H1 (cell line): ENCODE measurements at regions of chr1 and their contacts with region 1.

Region 1: GRCh38 chr1:220281159-220281574 is 8.9 kb upstream of the RAB3GAP2 start:
- DNase-seq: no peak
- H3K4me3 ChIP-seq: no peak overlapping the region
- H3K27ac ChIP-seq: no peak overlapping the region
- H3K4me1 ChIP-seq: no peaks in the 10 kb centered on the region
- H3K27me3 ChIP-seq: no peaks in the 10 kb centered on the region
- CTCF ChIP-seq: peak in 2 of 3 experiments; percentile 47 to 65; a peak in 2 of 4 replicates
- EP300 ChIP-seq: no peak
- POLR2A ChIP-seq: no peak
- RAD21 ChIP-seq: peak; percentile 83 to 85

Region 2: DNA sequence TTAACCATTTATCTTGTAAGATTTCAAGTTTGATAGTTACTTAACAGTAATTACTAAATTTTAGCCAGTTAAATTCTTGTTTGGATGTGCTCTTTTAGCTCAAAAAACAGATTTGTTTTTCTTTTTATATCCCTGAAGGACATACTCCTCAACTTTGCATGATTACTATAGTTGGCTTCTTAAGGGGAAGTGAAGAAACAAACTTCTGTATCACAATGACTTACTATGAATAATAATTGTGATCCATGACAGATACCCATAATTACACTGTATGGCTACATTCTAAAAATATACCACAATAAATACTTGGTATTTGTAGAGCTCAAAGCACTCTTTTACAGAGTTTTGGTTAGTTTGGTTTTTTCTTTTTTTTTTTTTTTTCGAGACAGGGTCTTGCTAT is 131.4 kb before region 1 on chr1:
- CTCF ChIA-PET with region 1: no interaction called
- POLR2A ChIA-PET with region 1: no interaction called
- DNase-seq: no peak
- H3K4me3 ChIP-seq: no peak overlapping the region
- H3K27ac ChIP-seq: no peak overlapping the region
- H3K4me1 ChIP-seq: no peaks in the 10 kb centered on the region
- H3K27me3 ChIP-seq: no peaks in the 10 kb centered on the region
- CTCF ChIP-seq: no peak
- EP300 ChIP-seq: no peak
- POLR2A ChIP-seq: no peak
- RAD21 ChIP-seq: no peak

Region 3: GRCh38 chr1:220243947-220244346 is 37.2 kb before region 1 on chr1:
- CTCF ChIA-PET with region 1: no interaction called
- POLR2A ChIA-PET with region 1: no interaction called
- DNase-seq: no peak
- H3K4me3 ChIP-seq: no peak overlapping the region
- H3K27ac ChIP-seq: no peak overlapping the region
- H3K4me1 ChIP-seq: peaks cover 0 to 3% (median 0%) of the 10 kb centered on the region in 4 experiments; a peak in 1 of 7 replicates
- H3K27me3 ChIP-seq: no peaks in the 10 kb centered on the region
- CTCF ChIP-seq: no peak
- EP300 ChIP-seq: no peak
- POLR2A ChIP-seq: no peak
- RAD21 ChIP-seq: no peak

Region 4: GRCh38 chr1:220269036-220269435 is 12.1 kb before region 1 on chr1:
- CTCF ChIA-PET with region 1: interaction called, 13 read pairs
- POLR2A ChIA-PET with region 1: interaction called, 9 read pairs
- DNase-seq: no peak
- H3K4me3 ChIP-seq: no peak overlapping the region
- H3K27ac ChIP-seq: no peak overlapping the region
- H3K4me1 ChIP-seq: peaks cover 0 to 8% (median under 1%) of the 10 kb centered on the region in 4 experiments; a peak in 3 of 7 replicates
- H3K27me3 ChIP-seq: no peaks in the 10 kb centered on the region
- CTCF ChIP-seq: no peak
- EP300 ChIP-seq: no peak
- POLR2A ChIP-seq: no peak
- RAD21 ChIP-seq: no peak

Region 5: GRCh38 chr1:220370031-220370700 is 89.0 kb after region 1 on chr1:
- CTCF ChIA-PET with region 1: interaction called, 14 read pairs
- POLR2A ChIA-PET with region 1: no interaction called
- DNase-seq: no peak
- H3K4me3 ChIP-seq: no peak overlapping the region
- H3K27ac ChIP-seq: no peak overlapping the region
- H3K4me1 ChIP-seq: peaks cover 6 to 14% (median 11%) of the 10 kb centered on the region in 4 experiments; a peak in 6 of 7 replicates
- H3K27me3 ChIP-seq: no peaks in the 10 kb centered on the region
- CTCF ChIP-seq: no peak
- EP300 ChIP-seq: no peak
- POLR2A ChIP-seq: no peak
- RAD21 ChIP-seq: no peak

Region 6: GRCh38 chr1:220726634-220727033 is 445.5 kb after region 1 on chr1:
- CTCF ChIA-PET with region 1: interaction called, 18 read pairs
- POLR2A ChIA-PET with region 1: no interaction called
- DNase-seq: no peak
- H3K4me3 ChIP-seq: no peak overlapping the region
- H3K27ac ChIP-seq: no peak overlapping the region
- H3K4me1 ChIP-seq: no peaks in the 10 kb centered on the region
- H3K27me3 ChIP-seq: no peaks in the 10 kb centered on the region
- CTCF ChIP-seq: peak; percentile 31 to 62 (median 33)
- EP300 ChIP-seq: no peak
- POLR2A ChIP-seq: no peak
- RAD21 ChIP-seq: peak in 1 of 2 experiments; percentile 35; a peak in 2 of 4 replicates

Region 7: GRCh38 chr1:220776720-220777326 is 495.7 kb after region 1 on chr1:
- CTCF ChIA-PET with region 1: interaction called, 13 read pairs
- POLR2A ChIA-PET with region 1: no interaction called
- DNase-seq: peak in 1 of 2 experiments; percentile 85
- H3K4me3 ChIP-seq: no peak overlapping the region
- H3K27ac ChIP-seq: no peak overlapping the region
- H3K4me1 ChIP-seq: no peaks in the 10 kb centered on the region
- H3K27me3 ChIP-seq: no peaks in the 10 kb centered on the region
- CTCF ChIP-seq: peak; percentile 73 to 86 (median 82)
- EP300 ChIP-seq: no peak
- POLR2A ChIP-seq: no peak
- RAD21 ChIP-seq: peak; percentile 86 to 89

Region 8: GRCh38 chr1:220970311-220970710 is 689.1 kb after region 1 on chr1:
- CTCF ChIA-PET with region 1: no interaction called
- POLR2A ChIA-PET with region 1: no interaction called
- DNase-seq: no peak
- H3K4me3 ChIP-seq: no peak overlapping the region
- H3K27ac ChIP-seq: no peak overlapping the region
- H3K4me1 ChIP-seq: peaks cover 0 to 4% (median 0%) of the 10 kb centered on the region in 4 experiments; a peak in 1 of 7 replicates
- H3K27me3 ChIP-seq: no peaks in the 10 kb centered on the region
- CTCF ChIP-seq: no peak
- EP300 ChIP-seq: no peak
- POLR2A ChIP-seq: no peak
- RAD21 ChIP-seq: no peak